ENCODE measurements at regions of chr6 and their contacts with region 1.

Region 1: GRCh38 chr6:446418-447366 is 55.1 kb downstream of the IRF4 start:
- DNase-seq: peak; percentile 83
- ATAC-seq: peak; percentile 72
- H3K4me3 Mint-ChIP-seq: peak overlapping the region; percentile 63
- H3K27ac Mint-ChIP-seq: peak overlapping the region; percentile 94
- H3K4me1 Mint-ChIP-seq: peaks cover 40% of the 10 kb centered on the region
- H3K27me3 Mint-ChIP-seq: no peaks in the 10 kb centered on the region

Region 2: DNA sequence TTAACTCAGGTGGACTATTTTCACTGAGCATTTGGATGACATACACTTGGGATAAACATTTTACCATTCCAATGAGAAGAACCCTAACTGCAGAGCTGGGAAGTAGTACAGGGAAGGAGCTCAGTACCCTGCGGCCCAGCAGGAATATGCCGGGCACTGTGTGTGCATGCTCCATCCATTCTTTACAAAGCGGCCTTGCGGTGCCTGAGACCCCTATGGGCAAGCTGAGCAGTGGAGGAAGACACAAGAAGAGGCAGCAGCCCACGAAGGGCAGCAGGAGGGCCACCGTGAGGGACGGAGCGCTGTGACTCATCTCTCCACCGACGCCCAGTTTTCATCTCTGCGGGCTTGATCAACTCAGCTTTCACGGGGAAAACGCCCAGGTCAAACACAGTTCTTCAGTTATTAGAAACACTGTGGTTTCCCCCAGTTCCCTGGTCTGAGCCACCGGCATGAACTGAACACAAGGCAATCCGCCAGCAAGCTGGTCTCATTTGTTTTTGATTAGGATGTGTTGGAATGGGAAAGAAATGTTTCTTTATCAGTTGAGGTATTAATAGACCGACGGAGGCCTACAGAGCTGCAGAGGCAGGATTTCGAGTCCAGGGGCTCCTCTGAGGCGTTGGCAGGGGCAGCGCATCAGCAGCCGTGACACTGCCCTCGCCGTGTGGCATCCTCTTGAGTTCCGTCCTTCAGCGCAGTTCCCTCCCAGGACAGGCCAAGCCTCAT is 10.2 kb before region 1 on chr6:
- POLR2A ChIA-PET with region 1: interaction called, 49 read pairs
- DNase-seq: no peak
- ATAC-seq: no peak
- H3K4me3 Mint-ChIP-seq: no peak overlapping the region
- H3K27ac Mint-ChIP-seq: peak overlapping the region; percentile 12
- H3K4me1 Mint-ChIP-seq: peaks cover 34% of the 10 kb centered on the region
- H3K27me3 Mint-ChIP-seq: no peaks in the 10 kb centered on the region

Region 3: DNA sequence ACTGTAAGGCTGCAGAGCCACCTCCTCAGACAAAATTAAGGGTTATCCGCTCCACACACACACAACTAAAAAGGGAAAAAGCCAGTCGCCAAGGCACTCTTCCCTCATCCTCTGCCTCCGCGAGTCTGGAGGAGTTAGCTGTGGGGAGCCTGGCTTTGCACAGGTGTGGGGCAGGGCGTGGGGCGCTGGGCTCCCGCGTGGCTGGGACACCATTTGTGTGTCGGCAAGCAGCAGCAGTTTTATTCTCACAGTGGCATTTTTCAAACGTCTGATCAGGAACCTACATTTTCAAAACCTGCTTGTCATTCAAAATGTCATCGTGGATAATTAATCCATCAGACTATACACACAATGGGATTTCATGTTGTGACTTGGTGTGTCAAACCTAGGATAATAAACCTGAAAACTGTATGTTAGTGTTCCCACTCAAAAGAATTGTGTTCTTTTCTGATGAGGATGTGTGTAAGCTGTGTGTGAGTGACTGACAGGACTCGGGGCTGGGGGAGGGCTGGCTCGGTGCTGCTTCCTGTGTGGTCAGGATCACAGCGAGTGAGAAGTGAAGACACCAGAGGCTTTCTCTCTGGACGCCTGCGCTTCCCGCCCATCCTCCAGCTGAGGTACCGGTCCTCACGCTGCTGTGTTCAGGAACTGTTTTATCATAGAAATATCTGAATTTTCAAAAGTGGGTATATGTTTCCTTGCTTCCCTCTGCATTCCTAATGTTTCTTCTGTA is 27.9 kb after region 1 on chr6:
- POLR2A ChIA-PET with region 1: interaction called, 35 read pairs
- DNase-seq: peak; percentile 76
- ATAC-seq: peak; percentile 100
- H3K4me3 Mint-ChIP-seq: peak overlapping the region; percentile 72
- H3K27ac Mint-ChIP-seq: peak overlapping the region; percentile 95
- H3K4me1 Mint-ChIP-seq: peaks cover 60% of the 10 kb centered on the region
- H3K27me3 Mint-ChIP-seq: no peaks in the 10 kb centered on the region

Region 4: DNA sequence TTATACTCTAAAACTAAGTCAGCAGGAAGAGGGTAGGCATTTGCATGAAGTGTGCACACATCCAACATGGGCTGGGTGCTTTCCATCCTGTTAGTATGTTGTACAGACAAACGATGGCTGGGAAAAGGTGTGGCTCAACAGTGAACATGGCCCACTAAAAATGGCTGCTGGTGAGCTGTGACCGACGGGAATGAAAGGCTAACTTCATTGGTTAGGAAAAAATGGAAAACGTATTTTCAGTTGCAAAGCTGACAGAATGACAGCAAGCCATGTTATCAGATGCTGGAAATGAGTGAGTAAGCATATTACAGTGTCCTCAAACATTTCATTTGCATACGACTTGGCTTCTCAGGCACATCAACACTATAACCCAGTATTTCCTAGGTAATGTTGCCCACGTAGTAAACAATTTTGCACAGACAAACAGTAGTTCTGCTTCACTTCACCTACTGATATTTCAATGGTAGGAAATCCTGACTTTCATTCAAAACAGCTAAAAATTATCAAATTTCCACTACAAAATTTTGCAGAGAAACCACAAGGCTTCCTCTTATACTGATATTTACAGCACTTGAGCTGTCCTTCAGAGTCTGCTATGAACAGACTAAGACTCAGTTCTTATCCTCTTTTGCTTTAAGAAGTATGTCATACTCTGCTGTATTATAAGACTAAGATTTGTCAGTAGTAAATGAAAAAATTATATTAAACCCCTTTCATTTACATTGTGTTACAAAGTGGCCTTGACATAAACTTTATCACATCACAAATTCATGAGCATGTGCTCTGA is 43.8 kb after region 1 on chr6:
- POLR2A ChIA-PET with region 1: interaction called, 38 read pairs
- DNase-seq: no peak
- ATAC-seq: peak; percentile 38
- H3K4me3 Mint-ChIP-seq: peak overlapping the region; percentile 67
- H3K27ac Mint-ChIP-seq: peak overlapping the region; percentile 91
- H3K4me1 Mint-ChIP-seq: peaks cover 68% of the 10 kb centered on the region
- H3K27me3 Mint-ChIP-seq: no peaks in the 10 kb centered on the region

Region 5: DNA sequence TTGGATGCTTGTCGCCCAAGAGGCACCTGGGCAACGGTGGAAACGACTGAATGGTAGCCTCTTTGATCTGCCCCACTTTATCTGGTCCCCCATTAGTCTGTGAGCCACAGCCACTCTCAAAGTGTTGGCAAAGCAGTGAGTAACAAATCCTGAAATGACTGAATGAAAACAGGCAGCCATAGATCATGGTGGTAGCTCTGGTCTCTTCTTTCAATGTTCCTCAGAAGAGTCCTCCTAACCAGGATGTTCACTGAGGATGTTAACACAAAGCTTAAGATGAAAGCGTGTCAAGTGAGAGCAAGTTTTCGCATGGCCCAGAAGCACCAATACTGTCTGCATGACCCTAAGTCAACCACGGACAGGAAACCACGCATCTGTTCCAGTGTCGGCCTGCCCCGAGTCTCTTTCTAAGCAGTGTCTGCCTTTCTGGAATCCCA is 52.1 kb after region 1 on chr6:
- POLR2A ChIA-PET with region 1: interaction called, 18 read pairs
- DNase-seq: peak; percentile 59
- ATAC-seq: peak; percentile 80
- H3K4me3 Mint-ChIP-seq: peak overlapping the region; percentile 78
- H3K27ac Mint-ChIP-seq: peak overlapping the region; percentile 87
- H3K4me1 Mint-ChIP-seq: peaks cover 65% of the 10 kb centered on the region
- H3K27me3 Mint-ChIP-seq: no peaks in the 10 kb centered on the region

Measured in activated naive CD8-positive, alpha-beta T cell treated with anti-CD3 and anti-CD28 coated beads, Interleukin-2, amount 10 ng/mL, durations not matched to agents 7 days and 5 days (primary cell).